CD8-positive, alpha-beta T cell (primary cell): ENCODE measurements at regions of chr14 and their contacts with region 1.

Region 1: DNA sequence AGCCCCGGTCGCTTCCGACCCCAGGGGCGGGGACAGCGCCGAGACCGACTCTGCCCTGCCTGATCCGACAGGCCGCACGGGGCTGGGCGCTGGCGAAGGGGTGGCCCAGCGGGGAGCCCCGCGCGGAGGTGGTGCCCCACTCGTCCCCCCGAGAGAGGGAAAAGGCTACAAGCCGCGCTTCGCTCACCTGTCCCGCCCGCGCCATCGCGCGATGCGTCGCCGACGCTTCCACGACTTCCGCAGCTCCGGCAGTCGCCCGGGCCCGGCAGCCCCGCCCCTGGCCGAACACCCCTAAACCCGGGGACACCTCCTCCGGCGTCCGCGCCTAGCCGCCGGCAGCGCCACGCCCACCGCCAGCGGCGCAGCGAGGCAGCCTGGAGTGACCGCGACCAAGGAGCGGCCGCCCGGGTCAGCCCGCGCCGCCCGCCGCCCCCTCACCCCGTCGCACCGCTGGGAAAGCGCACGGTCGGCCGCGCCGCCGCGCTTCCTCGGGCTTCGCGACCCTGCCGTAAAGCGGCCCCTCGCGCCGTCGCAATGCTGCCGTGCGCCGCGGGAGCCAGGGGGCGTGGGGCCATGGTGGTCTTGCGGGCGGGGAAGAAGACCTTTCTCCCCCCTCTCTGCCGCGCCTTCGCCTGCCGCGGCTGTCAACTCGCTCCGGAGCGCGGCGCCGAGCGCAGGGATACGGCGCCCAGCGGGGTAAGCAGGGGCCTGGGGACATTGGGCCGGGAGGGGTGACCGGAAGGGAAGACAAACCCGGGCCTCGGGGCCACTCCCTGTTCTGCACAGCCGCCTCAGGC is at the starts of genes BAG5 and COA8:
- DNase-seq: peak; percentile 68 to 92 (median 86)
- ATAC-seq: peak; percentile 81
- H3K4me3 ChIP-seq: peak within 1 kb of the TSS; percentile 96 to 97
- H3K4me3 Mint-ChIP-seq: peak within 1 kb of the TSS; percentile 83
- H3K27ac ChIP-seq: peak within 1 kb of the TSS; percentile 81 to 86
- H3K27ac Mint-ChIP-seq: peak within 1 kb of the TSS; percentile 87
- H3K4me1 ChIP-seq: peaks cover 46% of the 10 kb centered on the region
- H3K4me1 Mint-ChIP-seq: peaks cover 62% of the 10 kb centered on the region
- H3K27me3 ChIP-seq: no peaks in the 10 kb centered on the region
- H3K27me3 Mint-ChIP-seq: no peaks in the 10 kb centered on the region
- CTCF ChIP-seq: no peak
- total RNA-seq, gene BAG5: 46.2 to 46.3 TPM
- total RNA-seq, gene COA8: 11.6 to 13.4 TPM

Region 2: GRCh38 chr14:103385152-103385993 is 177.3 kb before region 1 on chr14 and contains the start of gene MARK3:
- CTCF ChIA-PET with region 1: no interaction called
- POLR2A ChIA-PET with region 1: no interaction called
- intact Hi-C with region 1: loop called (anchors 1 kb)
- DNase-seq: peak; percentile 91 to 98 (median 96)
- ATAC-seq: peak; percentile 88
- H3K4me3 ChIP-seq: peak within 1 kb of the TSS; percentile 72 to 73
- H3K4me3 Mint-ChIP-seq: peak within 1 kb of the TSS; percentile 97
- H3K27ac ChIP-seq: peak within 1 kb of the TSS; percentile 76 to 92
- H3K27ac Mint-ChIP-seq: peak within 1 kb of the TSS; percentile 96
- H3K4me1 ChIP-seq: peaks cover 26% of the 10 kb centered on the region
- H3K4me1 Mint-ChIP-seq: peaks cover 33% of the 10 kb centered on the region
- H3K27me3 ChIP-seq: no peaks in the 10 kb centered on the region
- H3K27me3 Mint-ChIP-seq: no peaks in the 10 kb centered on the region
- CTCF ChIP-seq: peak; percentile 16
- total RNA-seq, gene MARK3: 123 to 124 TPM

Region 3: GRCh38 chr14:103528587-103529382 is 33.8 kb before region 1 on chr14 and contains the start of gene TRMT61A:
- CTCF ChIA-PET with region 1: no interaction called
- POLR2A ChIA-PET with region 1: interaction called, 3 read pairs
- intact Hi-C with region 1: loop called (anchors 1 kb)
- DNase-seq: peak; percentile 57 to 89 (median 77)
- ATAC-seq: peak; percentile 90
- H3K4me3 ChIP-seq: peak within 1 kb of the TSS; percentile 87 to 92
- H3K4me3 Mint-ChIP-seq: peak within 1 kb of the TSS; percentile 91
- H3K27ac ChIP-seq: peak within 1 kb of the TSS; percentile 77 to 88
- H3K27ac Mint-ChIP-seq: peak within 1 kb of the TSS; percentile 93
- H3K4me1 ChIP-seq: peaks cover 31% of the 10 kb centered on the region
- H3K4me1 Mint-ChIP-seq: peaks cover 37% of the 10 kb centered on the region
- H3K27me3 ChIP-seq: no peaks in the 10 kb centered on the region
- H3K27me3 Mint-ChIP-seq: peaks cover under 1% of the 10 kb centered on the region
- CTCF ChIP-seq: no peak
- total RNA-seq, gene TRMT61A: 10.9 to 11.6 TPM

Region 4: DNA sequence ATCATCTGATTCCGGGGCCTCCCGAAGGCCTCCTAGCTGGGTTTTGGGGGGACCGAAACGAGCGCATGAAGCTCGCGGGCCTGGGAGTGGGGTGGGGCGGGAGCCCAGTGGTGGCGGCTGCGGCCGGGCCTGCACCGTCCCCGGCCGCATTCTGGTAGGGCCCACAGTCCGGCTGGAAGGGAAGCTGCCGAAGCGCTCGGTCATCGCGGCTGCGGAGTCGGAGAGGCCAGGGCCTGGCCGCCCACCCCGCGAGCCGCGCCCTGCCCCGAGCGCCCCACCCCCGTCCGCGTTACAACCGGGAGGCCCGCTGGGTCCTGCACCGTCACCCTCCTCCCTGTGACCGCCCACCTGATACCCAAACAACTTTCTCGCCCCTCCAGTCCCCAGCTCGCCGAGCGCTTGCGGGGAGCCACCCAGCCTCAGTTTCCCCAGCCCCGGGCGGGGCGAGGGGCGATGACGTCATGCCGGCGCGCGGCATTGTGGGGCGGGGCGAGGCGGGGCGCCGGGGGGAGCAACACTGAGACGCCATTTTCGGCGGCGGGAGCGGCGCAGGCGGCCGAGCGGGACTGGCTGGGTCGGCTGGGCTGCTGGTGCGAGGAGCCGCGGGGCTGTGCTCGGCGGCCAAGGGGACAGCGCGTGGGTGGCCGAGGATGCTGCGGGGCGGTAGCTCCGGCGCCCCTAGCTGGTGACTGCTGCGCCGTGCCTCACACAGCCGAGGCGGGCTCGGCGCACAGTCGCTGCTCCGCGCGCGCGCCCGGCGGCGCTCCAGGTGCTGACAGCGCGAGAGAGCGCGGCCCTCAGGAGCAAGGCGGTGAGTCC is 66.3 kb after region 1 on chr14 and contains the start of gene KLC1:
- CTCF ChIA-PET with region 1: no interaction called
- POLR2A ChIA-PET with region 1: no interaction called
- intact Hi-C with region 1: loop called (anchors 1 kb)
- DNase-seq: peak; percentile 67 to 91 (median 85)
- ATAC-seq: peak; percentile 83
- H3K4me3 ChIP-seq: peak within 1 kb of the TSS; percentile 84 to 98
- H3K4me3 Mint-ChIP-seq: peak within 1 kb of the TSS; percentile 87
- H3K27ac ChIP-seq: peak within 1 kb of the TSS; percentile 81 to 87
- H3K27ac Mint-ChIP-seq: peak within 1 kb of the TSS; percentile 89
- H3K4me1 ChIP-seq: peaks cover 41% of the 10 kb centered on the region
- H3K4me1 Mint-ChIP-seq: peaks cover 47% of the 10 kb centered on the region
- H3K27me3 ChIP-seq: no peaks in the 10 kb centered on the region
- H3K27me3 Mint-ChIP-seq: no peaks in the 10 kb centered on the region
- CTCF ChIP-seq: no peak
- total RNA-seq, gene KLC1: 119 to 130 TPM

Region 5: DNA sequence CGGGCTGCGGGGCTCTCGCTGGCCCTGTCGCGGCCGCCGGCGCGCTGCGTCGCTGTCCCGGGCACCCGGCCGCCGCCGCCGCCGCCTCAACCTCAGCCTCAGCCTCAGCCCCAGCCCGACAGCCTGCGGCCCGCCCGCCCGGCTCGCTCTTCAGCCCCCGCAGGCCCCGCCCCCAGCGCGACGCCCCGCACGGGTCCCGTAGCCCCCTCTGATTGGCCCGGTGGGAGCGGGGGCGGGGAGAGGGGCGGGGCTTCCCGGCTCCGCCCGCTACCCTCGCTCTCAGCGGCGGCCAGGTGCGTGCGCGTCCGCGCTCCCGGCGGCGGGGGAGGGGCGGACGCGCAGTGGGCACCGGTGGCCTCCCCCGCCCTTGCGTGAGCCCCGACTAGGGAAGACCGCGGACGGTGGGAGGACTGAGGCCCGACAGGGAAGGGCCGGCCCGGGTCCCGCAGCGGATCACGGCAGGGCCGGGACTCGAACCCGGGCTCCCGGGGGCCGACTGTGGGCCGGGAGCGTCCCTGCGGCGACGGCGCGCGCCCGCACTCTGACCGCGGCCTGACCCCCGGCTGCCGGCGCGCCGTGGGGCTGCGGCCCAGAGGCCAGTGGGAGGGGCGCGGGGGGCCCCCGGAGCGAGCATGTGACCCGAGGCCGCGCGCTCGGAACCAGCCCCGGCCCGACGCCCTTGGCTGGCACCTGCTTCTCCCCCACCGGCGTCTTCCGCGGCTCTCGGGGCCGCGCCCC is 285.0 kb after region 1 on chr14 and contains the start of gene PPP1R13B:
- CTCF ChIA-PET with region 1: no interaction called
- POLR2A ChIA-PET with region 1: interaction called, 4 read pairs
- intact Hi-C with region 1: loop called in 1 of 2 experiments (anchors 1 kb)
- DNase-seq: peak; percentile 88 to 97 (median 92)
- ATAC-seq: peak; percentile 98
- H3K4me3 ChIP-seq: peak within 1 kb of the TSS; percentile 65 to 73
- H3K4me3 Mint-ChIP-seq: peak within 1 kb of the TSS; percentile 90
- H3K27ac ChIP-seq: peak within 1 kb of the TSS in 1 of 2 experiments; percentile 27
- H3K27ac Mint-ChIP-seq: peak within 1 kb of the TSS; percentile 74
- H3K4me1 ChIP-seq: peaks cover 14% of the 10 kb centered on the region
- H3K4me1 Mint-ChIP-seq: peaks cover 20% of the 10 kb centered on the region
- H3K27me3 ChIP-seq: no peaks in the 10 kb centered on the region
- H3K27me3 Mint-ChIP-seq: no peaks in the 10 kb centered on the region
- CTCF ChIP-seq: no peak
- total RNA-seq, gene PPP1R13B: 20.9 to 22.6 TPM